ENCODE measurements at regions of chr1 and their contacts with region 1.

Region 1: DNA sequence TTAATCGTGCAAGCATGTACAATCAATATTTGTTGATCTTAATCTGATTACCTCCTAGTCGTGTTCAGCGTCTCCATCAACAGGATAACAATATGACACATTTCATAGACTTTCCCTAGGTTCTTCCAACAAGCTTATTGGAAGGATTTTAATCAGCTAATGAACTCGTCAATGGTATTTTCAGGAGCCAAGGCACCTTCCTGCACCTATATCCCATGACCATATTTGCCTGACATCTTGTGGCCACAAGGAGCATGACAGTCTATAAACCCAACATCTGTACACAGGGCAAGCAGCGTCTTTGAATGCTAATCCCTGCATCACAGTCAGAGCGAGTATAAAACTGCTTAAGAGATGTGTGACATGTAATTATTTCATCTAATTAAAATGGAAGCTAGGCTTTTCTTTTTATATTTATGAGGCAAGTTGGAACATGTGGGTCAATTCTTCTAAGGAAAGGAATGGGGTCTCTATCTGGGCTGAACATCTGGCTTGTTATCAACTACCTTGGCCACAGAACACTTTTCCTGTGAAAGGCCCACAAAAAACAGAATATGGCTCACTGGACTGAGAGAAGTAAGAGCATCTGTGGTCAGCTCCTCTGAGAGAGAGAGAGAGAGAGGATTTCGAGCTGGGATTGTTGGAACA is 388.8 kb downstream of the NTNG1 start:
- DNase-seq: no peak
- ATAC-seq: peak in 3 of 4 donors; percentile 64 to 73 (median 69)
- H3K4me3 ChIP-seq: no peak overlapping the region
- H3K27ac ChIP-seq: no peak overlapping the region
- H3K4me1 ChIP-seq: no peaks in the 10 kb centered on the region
- H3K27me3 ChIP-seq: peaks cover 0 to 3% (median 0%) of the 10 kb centered on the region in 3 donors
- CTCF ChIP-seq: peak; percentile 77

Region 2: GRCh38 chr1:107277022-107277421 is 252.6 kb before region 1 on chr1:
- intact Hi-C with region 1: loop called (anchors 2 to 5 kb)
- DNase-seq: no peak
- ATAC-seq: no peak
- H3K4me3 ChIP-seq: no peak overlapping the region
- H3K27ac ChIP-seq: no peak overlapping the region
- H3K4me1 ChIP-seq: no peaks in the 10 kb centered on the region
- H3K27me3 ChIP-seq: peaks cover 0 to 2% (median 0%) of the 10 kb centered on the region in 3 donors
- CTCF ChIP-seq: peak; percentile 38

Region 3: GRCh38 chr1:107430540-107431228 is 98.9 kb before region 1 on chr1:
- intact Hi-C with region 1: loop called (anchors 2 to 5 kb)
- DNase-seq: no peak
- ATAC-seq: peak in 3 of 4 donors; percentile 42 to 64 (median 60)
- H3K4me3 ChIP-seq: no peak overlapping the region
- H3K27ac ChIP-seq: no peak overlapping the region
- H3K4me1 ChIP-seq: no peaks in the 10 kb centered on the region
- H3K27me3 ChIP-seq: no peaks in the 10 kb centered on the region
- CTCF ChIP-seq: peak; percentile 67

Measured in psoas muscle (tissue), 8 donors.